A549 (cell line): ENCODE measurements at regions of chr4 and their contacts with region 1.

Region 1: DNA sequence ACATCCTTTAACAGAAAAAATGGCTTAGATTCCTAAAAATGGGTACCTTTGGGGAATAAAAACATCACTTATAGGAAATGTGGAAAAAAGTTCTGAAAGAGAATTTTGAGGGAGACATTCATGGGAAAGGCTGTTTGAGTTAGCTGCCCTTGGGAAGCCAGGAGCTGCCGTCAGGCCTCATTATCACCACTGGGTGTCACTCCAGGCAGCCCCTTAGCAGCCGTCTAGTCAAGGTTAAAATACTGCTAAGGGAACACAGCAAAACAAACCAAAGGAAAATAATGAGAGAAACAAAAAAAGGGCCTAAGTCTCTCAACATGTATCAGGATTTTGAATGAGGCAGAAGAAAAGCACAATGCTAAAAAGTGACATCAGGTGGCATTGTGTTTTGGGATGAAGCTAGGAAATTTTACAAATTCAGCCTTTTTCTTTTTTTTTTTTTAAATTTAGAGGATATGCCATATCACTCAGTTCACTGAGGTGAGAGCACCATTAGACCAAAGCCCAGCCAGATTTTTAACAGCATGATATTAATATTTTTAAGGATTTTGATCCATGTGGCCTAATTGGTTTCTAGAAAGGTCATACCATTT is 235.3 kb downstream of the GPAT3 start:
- DNase-seq: peak; percentile 53 to 59
- ATAC-seq: peak; percentile 81 to 89; a peak in 5 of 6 replicates
- H3K4me3 ChIP-seq: no peak overlapping the region
- H3K27ac ChIP-seq: no peak overlapping the region
- H3K4me1 ChIP-seq: no peaks in the 10 kb centered on the region
- CTCF ChIP-seq: peak; percentile 66
- EP300 ChIP-seq: no peak
- POLR2A ChIP-seq: no peak
- RAD21 ChIP-seq: peak; percentile 82

Region 2: DNA sequence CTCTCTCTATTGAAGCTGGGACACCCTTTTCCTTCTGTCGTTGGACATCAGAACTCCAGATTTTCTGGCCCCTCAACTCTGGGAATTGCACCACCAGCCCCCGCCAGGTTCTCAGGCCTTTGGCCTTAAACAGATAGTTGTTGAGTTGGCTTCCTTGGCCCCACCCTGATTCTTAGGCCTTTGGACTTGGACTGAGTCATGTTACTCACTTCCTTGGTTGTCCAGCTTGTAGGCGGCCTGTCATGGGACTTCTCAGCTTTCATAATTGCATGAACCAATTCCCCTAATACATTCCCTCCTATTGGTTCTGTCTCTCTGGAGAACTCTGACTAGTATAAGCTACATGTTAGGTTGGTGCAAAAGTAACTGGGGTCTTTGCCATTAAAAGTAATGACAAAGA is 39.6 kb before region 1 on chr4:
- CTCF ChIA-PET with region 1: no interaction called
- POLR2A ChIA-PET with region 1: no interaction called
- DNase-seq: peak in 1 of 2 experiments; percentile 23
- ATAC-seq: no peak
- H3K4me3 ChIP-seq: no peak overlapping the region
- H3K27ac ChIP-seq: no peak overlapping the region
- H3K4me1 ChIP-seq: no peaks in the 10 kb centered on the region
- CTCF ChIP-seq: no peak
- EP300 ChIP-seq: no peak
- POLR2A ChIP-seq: no peak
- RAD21 ChIP-seq: no peak

Region 3: DNA sequence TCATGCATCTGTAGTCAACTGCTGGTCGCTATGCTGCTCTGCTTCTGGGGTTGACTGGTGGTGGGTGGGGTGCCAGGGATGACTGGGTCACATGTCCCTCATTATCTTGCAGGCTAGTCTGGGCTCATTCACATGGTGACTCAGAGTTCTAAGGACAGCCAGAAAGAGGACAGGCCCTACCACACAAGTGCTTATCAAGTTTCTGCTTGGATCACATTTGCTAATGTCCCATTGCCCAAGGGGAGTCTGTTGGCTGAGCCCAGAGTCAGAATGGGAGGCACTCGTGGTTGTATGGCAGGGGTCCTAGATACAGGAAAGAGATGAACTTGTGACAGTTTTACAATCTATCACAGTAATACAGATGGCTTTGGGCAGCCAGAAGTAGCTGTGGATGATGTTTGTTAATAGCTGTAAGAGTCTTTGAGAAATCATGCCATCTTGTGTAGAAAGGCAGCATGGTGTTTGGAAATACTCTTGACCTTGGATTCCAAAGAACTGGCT is 14.0 kb before region 1 on chr4:
- CTCF ChIA-PET with region 1: interaction called, 10 read pairs
- POLR2A ChIA-PET with region 1: no interaction called
- DNase-seq: no peak
- ATAC-seq: no peak
- H3K4me3 ChIP-seq: no peak overlapping the region
- H3K27ac ChIP-seq: no peak overlapping the region
- H3K4me1 ChIP-seq: no peaks in the 10 kb centered on the region
- CTCF ChIP-seq: no peak
- EP300 ChIP-seq: no peak
- POLR2A ChIP-seq: no peak
- RAD21 ChIP-seq: no peak

Region 4: GRCh38 chr4:83793481-83793880 is 22.3 kb after region 1 on chr4:
- CTCF ChIA-PET with region 1: no interaction called
- POLR2A ChIA-PET with region 1: no interaction called
- DNase-seq: no peak
- ATAC-seq: no peak
- H3K4me3 ChIP-seq: no peak overlapping the region
- H3K27ac ChIP-seq: no peak overlapping the region
- H3K4me1 ChIP-seq: no peaks in the 10 kb centered on the region
- CTCF ChIP-seq: no peak
- EP300 ChIP-seq: no peak
- POLR2A ChIP-seq: no peak
- RAD21 ChIP-seq: no peak

Region 5: GRCh38 chr4:83961575-83961974 is 190.4 kb after region 1 on chr4:
- CTCF ChIA-PET with region 1: interaction called, 33 read pairs
- POLR2A ChIA-PET with region 1: interaction called, 4 read pairs
- DNase-seq: peak in 1 of 2 experiments; percentile 21
- ATAC-seq: peak in 1 of 2 experiments; percentile 35; a peak in 1 of 6 replicates
- H3K4me3 ChIP-seq: no peak overlapping the region
- H3K27ac ChIP-seq: no peak overlapping the region
- H3K4me1 ChIP-seq: no peaks in the 10 kb centered on the region
- CTCF ChIP-seq: peak; percentile 50
- EP300 ChIP-seq: no peak
- POLR2A ChIP-seq: no peak
- RAD21 ChIP-seq: peak; percentile 62 to 72

Region 6: GRCh38 chr4:84503495-84504437 is 732.6 kb after region 1 on chr4:
- CTCF ChIA-PET with region 1: interaction called, 11 read pairs
- POLR2A ChIA-PET with region 1: no interaction called
- DNase-seq: peak; percentile 56 to 66
- ATAC-seq: peak; percentile 62 to 81
- H3K4me3 ChIP-seq: no peak overlapping the region
- H3K27ac ChIP-seq: no peak overlapping the region
- H3K4me1 ChIP-seq: no peaks in the 10 kb centered on the region
- CTCF ChIP-seq: peak; percentile 67
- EP300 ChIP-seq: no peak
- POLR2A ChIP-seq: no peak
- RAD21 ChIP-seq: peak; percentile 78 to 79